ENCODE measurements at regions of chr14 and their contacts with region 1.

Region 1: DNA sequence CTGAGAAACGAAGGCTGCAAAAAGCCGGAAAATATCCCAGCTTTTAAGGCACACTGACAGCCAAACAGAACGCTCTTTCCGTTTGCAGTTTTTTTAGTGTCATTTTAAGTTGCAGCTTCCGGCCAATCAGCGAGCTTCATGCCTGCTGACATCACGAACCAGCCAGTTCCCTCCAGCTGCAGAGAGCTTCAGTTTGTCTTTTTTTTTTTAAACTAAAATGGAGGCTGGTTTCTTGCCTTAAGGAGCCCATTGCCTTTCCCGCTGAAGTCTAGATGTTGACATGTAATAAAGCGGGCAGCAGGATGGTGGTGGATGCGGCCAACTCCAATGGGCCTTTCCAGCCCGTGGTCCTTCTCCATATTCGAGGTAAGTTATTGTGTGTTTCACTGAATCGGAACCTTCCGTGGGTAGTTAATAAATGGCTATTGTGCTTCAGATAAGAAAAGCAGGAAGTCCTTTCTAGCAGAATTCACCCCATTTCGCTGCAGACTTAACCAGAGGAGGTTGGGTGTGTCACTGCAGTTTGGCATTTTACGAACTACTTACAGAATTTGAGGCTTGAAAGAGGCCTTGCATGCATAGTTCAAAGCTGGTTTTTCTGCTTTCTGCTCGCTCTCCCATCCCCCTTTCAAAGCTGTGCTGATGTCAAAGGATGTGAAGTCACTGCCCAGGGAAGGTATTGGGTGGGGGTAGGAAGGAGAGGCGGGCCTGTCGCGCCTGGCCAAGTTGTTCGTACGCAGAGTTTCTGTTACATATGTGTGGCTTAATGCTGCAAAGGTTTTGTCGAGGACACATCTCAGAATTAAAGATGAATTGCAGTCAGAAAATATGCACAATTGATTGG is 48.4 kb downstream of the PPP2R5C start:
- DNase-seq: peak; percentile 76
- ATAC-seq: peak; percentile 79
- H3K4me3 Mint-ChIP-seq: peak overlapping the region; percentile 87
- H3K27ac Mint-ChIP-seq: peak overlapping the region; percentile 100
- H3K4me1 Mint-ChIP-seq: peaks cover 33% of the 10 kb centered on the region
- H3K27me3 Mint-ChIP-seq: no peaks in the 10 kb centered on the region
- CTCF ChIP-seq: no peak

Region 2: GRCh38 chr14:101707068-101707842 is 102.6 kb before region 1 on chr14:
- CTCF ChIA-PET with region 1: interaction called, 11 read pairs
- POLR2A ChIA-PET with region 1: no interaction called
- DNase-seq: peak; percentile 67
- ATAC-seq: peak; percentile 71
- H3K4me3 Mint-ChIP-seq: no peak overlapping the region
- H3K27ac Mint-ChIP-seq: no peak overlapping the region
- H3K4me1 Mint-ChIP-seq: peaks cover 29% of the 10 kb centered on the region
- H3K27me3 Mint-ChIP-seq: peaks cover 44% of the 10 kb centered on the region
- CTCF ChIP-seq: peak; percentile 94

Region 3: DNA sequence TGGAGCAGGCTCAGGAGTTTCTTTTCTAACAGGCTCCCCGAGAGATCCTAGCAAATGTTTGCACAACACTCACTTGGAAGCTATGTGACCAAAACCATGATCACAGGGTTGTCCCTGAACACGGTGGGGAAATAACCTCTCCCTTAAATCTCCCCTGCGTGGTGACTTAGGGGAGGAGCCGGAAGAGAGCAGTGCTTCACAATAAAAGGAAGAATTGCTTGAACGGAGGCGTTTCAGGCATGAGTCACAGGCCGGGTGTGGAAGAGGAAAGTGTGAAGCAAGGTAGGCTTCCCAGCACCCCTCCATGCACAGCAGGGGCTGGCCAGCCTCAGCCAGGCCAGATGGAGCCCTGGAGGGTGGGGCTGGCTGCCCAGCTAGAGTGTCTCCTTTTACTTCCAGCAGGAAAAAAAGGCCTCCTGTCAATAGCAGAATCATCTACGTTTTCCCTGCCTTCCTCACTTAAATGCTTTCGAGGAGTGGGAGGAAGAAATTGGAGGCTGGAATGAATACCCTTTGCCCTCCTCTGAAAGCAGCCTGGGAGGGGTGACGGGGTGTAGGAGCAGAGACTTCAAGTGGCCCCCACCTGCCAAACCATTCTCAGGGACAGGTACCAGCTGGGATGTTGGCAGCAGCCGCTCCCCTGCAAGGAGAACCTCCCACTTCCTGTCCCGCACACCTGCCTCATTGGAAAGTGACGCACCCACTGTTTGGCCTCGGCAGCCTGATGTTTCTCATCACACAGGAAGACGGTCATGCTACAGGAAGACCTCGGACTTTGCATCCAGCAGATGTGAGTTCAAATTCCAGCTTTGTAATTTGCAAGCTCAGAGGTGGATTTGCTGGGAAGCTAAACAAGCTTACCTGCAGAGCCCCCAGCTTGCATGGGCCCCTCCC is 78.5 kb before region 1 on chr14:
- CTCF ChIA-PET with region 1: no interaction called
- POLR2A ChIA-PET with region 1: no interaction called
- DNase-seq: no peak
- ATAC-seq: peak; percentile 67
- H3K4me3 Mint-ChIP-seq: peak overlapping the region; percentile 16; the same call in 1 of the 2 replicates
- H3K27ac Mint-ChIP-seq: no peak overlapping the region
- H3K4me1 Mint-ChIP-seq: peaks cover 26% of the 10 kb centered on the region
- H3K27me3 Mint-ChIP-seq: peaks cover 7% of the 10 kb centered on the region
- CTCF ChIP-seq: no peak

Region 4: GRCh38 chr14:101761032-101761880 is 48.6 kb before region 1 on chr14 and contains the start of gene PPP2R5C:
- CTCF ChIA-PET with region 1: interaction called, 10 read pairs
- POLR2A ChIA-PET with region 1: interaction called, 3 read pairs
- DNase-seq: peak; percentile 83
- ATAC-seq: peak; percentile 58
- H3K4me3 Mint-ChIP-seq: peak within 1 kb of the TSS; percentile 84
- H3K27ac Mint-ChIP-seq: no peak within 1 kb of the TSS
- H3K4me1 Mint-ChIP-seq: peaks cover 11% of the 10 kb centered on the region
- H3K27me3 Mint-ChIP-seq: peaks cover 63% of the 10 kb centered on the region
- CTCF ChIP-seq: no peak
- total RNA-seq, gene PPP2R5C: 89.9 to 105 TPM (median 99.9 TPM) in 3 replicates

Region 5: GRCh38 chr14:101834800-101835547 is 25.1 kb after region 1 on chr14:
- CTCF ChIA-PET with region 1: interaction called, 4 read pairs
- POLR2A ChIA-PET with region 1: interaction called, 10 read pairs
- DNase-seq: no peak
- ATAC-seq: no peak
- H3K4me3 Mint-ChIP-seq: no peak overlapping the region
- H3K27ac Mint-ChIP-seq: no peak overlapping the region
- H3K4me1 Mint-ChIP-seq: peaks cover 25% of the 10 kb centered on the region
- H3K27me3 Mint-ChIP-seq: no peaks in the 10 kb centered on the region
- CTCF ChIP-seq: no peak

Region 6: DNA sequence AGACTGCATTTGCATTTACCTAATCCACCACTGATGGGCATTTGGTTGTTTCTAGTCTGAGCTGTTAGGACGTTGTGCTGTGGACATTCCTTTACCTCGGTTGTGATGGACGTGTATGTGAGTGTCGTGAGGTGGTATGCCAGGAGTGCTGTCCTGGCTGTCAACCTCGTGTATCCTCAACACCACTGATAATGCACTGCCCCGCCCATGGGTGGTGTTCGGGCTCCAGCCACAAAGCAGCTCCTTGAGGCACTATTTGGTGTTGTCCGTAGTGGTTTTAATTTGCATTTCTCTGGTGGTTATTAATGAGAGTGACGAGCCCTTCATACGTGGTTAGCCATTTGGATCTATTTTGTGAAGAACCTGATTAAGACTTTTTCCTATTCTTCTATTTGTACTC is 39.2 kb after region 1 on chr14:
- CTCF ChIA-PET with region 1: no interaction called
- POLR2A ChIA-PET with region 1: no interaction called
- DNase-seq: no peak
- ATAC-seq: no peak
- H3K4me3 Mint-ChIP-seq: no peak overlapping the region
- H3K27ac Mint-ChIP-seq: no peak overlapping the region
- H3K4me1 Mint-ChIP-seq: peaks cover 26% of the 10 kb centered on the region
- H3K27me3 Mint-ChIP-seq: no peaks in the 10 kb centered on the region
- CTCF ChIP-seq: no peak

Region 7: DNA sequence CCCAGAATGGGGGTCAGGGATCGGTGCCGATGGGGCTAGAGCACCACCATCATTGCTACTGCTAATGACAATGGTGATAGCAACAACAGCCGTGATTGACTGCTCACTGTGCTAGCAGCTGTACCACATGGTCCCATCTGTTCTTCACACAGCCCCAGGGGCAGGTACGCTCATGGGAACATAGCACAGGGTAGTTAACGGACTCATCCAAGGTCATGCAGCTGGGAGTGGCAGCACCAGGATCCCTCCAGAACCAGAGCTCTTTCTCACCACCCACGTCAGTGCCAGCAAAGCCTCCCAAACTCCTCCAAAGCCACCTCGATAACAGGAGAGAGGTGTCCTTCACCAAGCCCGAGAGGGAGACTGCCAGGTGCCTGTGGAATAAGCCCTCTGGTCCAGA is 143.3 kb after region 1 on chr14:
- CTCF ChIA-PET with region 1: no interaction called
- POLR2A ChIA-PET with region 1: no interaction called
- DNase-seq: no peak
- ATAC-seq: no peak
- H3K4me3 Mint-ChIP-seq: no peak overlapping the region
- H3K27ac Mint-ChIP-seq: no peak overlapping the region
- H3K4me1 Mint-ChIP-seq: peaks cover 7% of the 10 kb centered on the region
- H3K27me3 Mint-ChIP-seq: no peaks in the 10 kb centered on the region; the same call in 1 of the 2 replicates
- CTCF ChIP-seq: no peak

Measured in WTC11 (cell line).